Activated T-helper 2 cell treated with anti-CD3 and anti-CD28 coated beads, Interferon-gamma antibody, Interleukin-2, Interleukin-4, amounts not matched to agents 10 μg/mL and 5 μg/mL and 100 μg/mL, durations not matched to agents 14 hours and 24 hours and 36 hours (primary cell): ENCODE measurements at regions of chr17 and their contacts with region 1.

Region 1: GRCh38 chr17:65799869-65800268 is 238.4 kb upstream of the AXIN2 start:
- DNase-seq: no peak
- H3K4me3 Mint-ChIP-seq: no peak overlapping the region
- H3K27ac Mint-ChIP-seq: peak overlapping the region; percentile 72
- H3K4me1 Mint-ChIP-seq: peaks cover 22% of the 10 kb centered on the region
- H3K27me3 Mint-ChIP-seq: no peaks in the 10 kb centered on the region

Region 2: DNA sequence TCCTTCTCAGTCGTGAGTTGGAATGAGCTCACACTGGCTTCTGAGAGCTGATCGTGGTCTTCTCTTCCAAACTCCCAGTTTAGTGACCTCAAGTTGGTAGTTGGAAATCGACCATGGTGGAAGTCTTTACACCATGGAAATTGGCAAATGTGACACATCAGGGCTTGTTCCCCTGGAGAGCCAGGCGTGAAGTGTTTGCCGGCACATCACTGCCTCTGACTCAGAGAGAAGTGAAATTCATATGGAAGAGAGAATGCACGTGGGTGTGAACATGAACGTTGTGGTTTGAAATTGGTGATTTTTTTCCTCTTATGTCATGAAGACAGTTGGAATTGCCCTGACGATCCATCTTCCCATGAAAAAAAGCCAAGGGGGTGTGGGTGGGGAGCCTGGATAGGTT is 285.8 kb before region 1 on chr17:
- intact Hi-C with region 1: loop called (anchors 2 kb)
- DNase-seq: no peak
- H3K4me3 Mint-ChIP-seq: no peak overlapping the region
- H3K27ac Mint-ChIP-seq: peak overlapping the region; percentile 18
- H3K4me1 Mint-ChIP-seq: peaks cover 10% of the 10 kb centered on the region
- H3K27me3 Mint-ChIP-seq: peaks cover 33% of the 10 kb centered on the region

Region 3: DNA sequence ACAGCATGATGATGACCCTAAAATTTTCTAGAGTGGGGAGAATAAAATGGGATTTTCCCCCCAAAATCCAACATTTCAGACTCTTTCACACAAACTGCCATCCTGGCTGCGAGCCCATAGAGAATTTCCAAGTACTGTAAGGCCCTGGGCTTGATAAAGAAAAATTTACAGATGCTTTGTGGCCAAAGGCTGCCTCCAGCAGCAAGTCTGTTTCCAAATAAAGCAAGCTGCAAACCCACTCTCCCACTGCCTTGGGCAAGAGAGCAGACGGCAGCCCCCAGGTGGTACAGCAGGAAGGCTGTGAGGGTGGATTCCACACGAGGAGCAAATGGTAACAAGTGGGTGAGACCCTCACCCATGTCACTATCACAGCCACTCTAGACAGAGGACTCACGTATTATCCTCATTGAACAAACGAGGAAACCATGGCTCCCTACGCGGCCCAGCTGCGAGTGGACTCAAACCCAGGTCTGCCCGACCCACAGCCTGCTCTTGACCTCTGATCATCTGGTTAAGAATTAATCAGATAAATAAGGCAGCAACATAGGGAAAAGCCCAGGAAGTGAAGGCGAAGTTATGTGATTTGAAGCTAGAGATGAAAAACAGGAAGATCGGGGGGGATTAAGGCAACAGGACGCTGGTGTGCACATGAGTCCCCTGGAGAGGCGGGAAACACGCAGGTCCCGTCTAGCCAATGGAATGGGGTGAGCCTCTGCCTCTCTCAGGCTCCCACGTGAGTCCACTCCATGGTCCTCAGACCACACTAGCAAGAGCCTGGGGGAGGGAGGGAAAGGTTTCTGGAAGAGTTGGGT is 275.8 kb before region 1 on chr17:
- intact Hi-C with region 1: loop called (anchors 1 kb)
- DNase-seq: no peak
- H3K4me3 Mint-ChIP-seq: peak overlapping the region; percentile 53
- H3K27ac Mint-ChIP-seq: peak overlapping the region; percentile 79
- H3K4me1 Mint-ChIP-seq: peaks cover 24% of the 10 kb centered on the region
- H3K27me3 Mint-ChIP-seq: peaks cover 32% of the 10 kb centered on the region

Region 4: GRCh38 chr17:65572581-65573281 is 227.1 kb before region 1 on chr17:
- intact Hi-C with region 1: no loop called
- DNase-seq: no peak
- H3K4me3 Mint-ChIP-seq: no peak overlapping the region
- H3K27ac Mint-ChIP-seq: no peak overlapping the region
- H3K4me1 Mint-ChIP-seq: no peaks in the 10 kb centered on the region
- H3K27me3 Mint-ChIP-seq: peaks cover 3% of the 10 kb centered on the region

Region 5: GRCh38 chr17:65723385-65724151 is 76.3 kb before region 1 on chr17:
- intact Hi-C with region 1: no loop called
- DNase-seq: no peak
- H3K4me3 Mint-ChIP-seq: no peak overlapping the region
- H3K27ac Mint-ChIP-seq: no peak overlapping the region
- H3K4me1 Mint-ChIP-seq: no peaks in the 10 kb centered on the region
- H3K27me3 Mint-ChIP-seq: peaks cover 14% of the 10 kb centered on the region